Astrocyte of the cerebellum (primary cell): ENCODE measurements at regions of chr7 and their contacts with region 1.

Region 1: DNA sequence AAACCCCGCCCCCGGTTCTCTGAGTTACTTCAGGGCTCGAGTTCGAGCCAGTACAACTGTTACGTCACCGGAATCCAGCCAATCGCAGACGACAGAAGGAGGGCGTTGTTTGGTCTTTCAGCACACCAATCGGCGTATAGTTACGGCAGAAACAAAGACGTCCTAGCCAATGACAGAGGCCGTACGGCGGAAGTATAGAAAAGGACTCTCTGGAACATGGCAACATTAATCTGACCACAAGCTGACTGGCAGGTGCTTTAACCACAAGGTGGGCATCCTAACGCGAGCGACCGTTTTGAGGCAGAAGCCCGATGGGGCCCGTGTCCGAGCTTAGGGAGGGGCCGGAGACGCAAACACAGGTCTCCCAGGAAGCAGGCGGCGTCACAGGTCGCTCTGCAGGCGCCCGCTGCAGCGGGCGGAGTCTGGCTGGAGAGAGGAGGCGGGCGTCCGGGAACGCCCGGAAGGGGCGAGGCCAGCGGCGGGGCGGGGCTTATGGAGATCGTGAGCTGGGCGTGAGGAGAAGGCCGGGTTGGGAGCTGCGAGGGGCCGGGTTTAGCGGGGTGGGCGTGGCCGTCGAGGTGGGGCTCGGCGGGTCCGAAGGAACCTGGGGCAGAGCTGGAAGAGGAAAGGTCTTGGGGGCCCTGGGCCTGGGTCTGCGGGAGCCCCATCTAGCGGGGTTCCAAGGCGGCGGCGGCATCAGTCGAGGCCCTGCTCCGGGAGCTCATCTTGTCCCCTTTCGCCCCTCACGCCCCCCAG is at the start of gene MOSPD3:
- DNase-seq: peak; percentile 99
- H3K4me3 ChIP-seq: peak within 1 kb of the TSS; percentile 52
- CTCF ChIP-seq: no peak

Region 2: DNA sequence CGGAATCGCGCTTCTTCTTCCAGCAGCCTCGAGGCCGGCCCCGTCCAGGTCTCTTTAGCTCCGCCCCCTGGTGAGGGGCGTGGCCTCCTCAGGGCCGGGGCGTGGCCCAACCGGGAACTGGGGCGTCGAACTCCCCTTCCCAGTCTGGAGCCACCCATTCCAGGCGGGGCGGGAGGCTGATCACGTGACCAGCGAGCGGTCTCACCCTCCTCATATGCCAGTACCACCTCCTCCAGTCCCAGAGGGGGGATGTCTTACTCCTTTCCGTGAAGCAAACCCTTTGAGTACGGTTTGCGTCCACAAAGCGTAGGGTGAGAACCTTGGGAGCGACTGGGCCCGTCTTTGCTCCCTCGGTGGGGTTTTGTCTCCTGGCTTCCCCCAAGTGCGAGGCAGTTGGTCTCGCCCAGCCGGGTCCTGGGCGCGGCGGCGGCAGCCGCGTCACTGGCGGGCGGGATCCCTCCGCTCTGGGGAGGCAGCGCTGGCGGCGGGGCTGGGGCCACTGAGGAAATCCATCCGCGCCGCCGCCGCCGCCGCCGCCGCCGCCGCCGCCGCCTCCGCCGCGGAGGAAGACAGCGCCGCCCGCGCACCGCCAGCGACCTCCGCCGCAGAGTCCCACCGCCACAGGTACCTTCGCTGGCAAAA is 61.3 kb after region 1 on chr7 and contains the start of gene GNB2:
- in situ Hi-C with region 1: loop called (anchors 5 kb)
- DNase-seq: peak; percentile 97
- H3K4me3 ChIP-seq: peak within 1 kb of the TSS; percentile 96
- CTCF ChIP-seq: no peak